GM18951 (cell line): ENCODE measurements at regions of chr4 and their contacts with region 1.

Region 1: DNA sequence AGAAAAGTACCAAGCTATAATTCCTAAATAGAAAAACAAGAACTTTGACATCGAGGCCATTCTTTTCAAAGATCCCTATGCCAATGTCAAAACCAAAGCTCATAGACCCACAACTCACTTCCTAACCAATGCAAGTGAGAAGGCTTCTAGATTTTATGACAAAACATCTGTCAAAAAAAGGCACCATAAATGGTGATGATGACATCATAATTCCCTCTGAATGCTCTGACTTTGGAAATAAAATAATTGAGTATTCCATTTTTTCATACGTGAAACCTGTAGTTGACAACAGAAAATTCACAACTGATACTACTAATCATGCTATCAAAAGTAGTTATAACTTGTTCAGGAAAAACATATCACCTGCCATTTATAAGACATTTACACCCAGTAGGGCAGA is 8.7 kb upstream of the CABS1 start:
- POLR2A ChIP-seq: no peak

Region 2: GRCh38 chr4:70515367-70516245 is 189.6 kb after region 1 on chr4:
- in situ Hi-C with region 1: loop called (anchors 10 kb)
- POLR2A ChIP-seq: no peak